ENCODE measurements at regions of chr3 and their contacts with region 1.

Region 1: DNA sequence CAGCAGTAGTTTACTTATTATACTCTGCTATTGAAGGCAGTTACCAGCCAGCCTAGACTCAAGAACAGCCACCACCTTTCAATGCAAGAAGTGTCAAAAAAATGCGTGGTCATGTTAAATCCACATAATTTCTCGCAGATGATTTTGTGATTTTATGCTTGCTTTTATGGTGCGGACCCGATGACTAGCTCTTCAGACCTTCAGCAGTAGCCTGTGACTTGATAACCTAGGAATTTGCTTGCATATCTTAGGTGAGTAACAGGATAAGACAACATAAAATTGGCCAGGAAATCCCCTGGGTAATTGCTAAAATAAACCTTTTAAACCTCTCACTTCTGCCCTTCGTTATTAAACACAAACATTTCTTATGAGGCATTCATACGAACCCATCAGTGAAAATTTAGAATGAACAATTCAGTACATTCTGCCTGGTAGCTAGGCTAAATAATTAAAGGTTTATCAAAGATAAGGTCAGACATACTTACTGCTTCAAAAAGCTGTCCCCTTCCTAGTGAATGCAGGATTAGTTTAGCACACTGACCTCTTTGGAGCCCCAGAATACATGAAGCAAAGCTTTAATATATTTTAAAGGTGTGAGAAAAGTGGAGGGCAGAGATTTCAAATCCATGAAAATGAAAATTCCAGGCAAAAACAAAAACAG is 798.8 kb downstream of the OTOL1 start:
- DNase-seq: no peak
- H3K4me3 ChIP-seq: no peak overlapping the region
- H3K4me3 Mint-ChIP-seq: peak overlapping the region; percentile 15
- H3K27ac Mint-ChIP-seq: peak overlapping the region; percentile 28
- H3K4me1 ChIP-seq: peaks cover 16% of the 10 kb centered on the region
- H3K4me1 Mint-ChIP-seq: peaks cover 8% of the 10 kb centered on the region
- H3K27me3 ChIP-seq: no peaks in the 10 kb centered on the region
- H3K27me3 Mint-ChIP-seq: no peaks in the 10 kb centered on the region
- CTCF ChIP-seq: no peak

Region 2: DNA sequence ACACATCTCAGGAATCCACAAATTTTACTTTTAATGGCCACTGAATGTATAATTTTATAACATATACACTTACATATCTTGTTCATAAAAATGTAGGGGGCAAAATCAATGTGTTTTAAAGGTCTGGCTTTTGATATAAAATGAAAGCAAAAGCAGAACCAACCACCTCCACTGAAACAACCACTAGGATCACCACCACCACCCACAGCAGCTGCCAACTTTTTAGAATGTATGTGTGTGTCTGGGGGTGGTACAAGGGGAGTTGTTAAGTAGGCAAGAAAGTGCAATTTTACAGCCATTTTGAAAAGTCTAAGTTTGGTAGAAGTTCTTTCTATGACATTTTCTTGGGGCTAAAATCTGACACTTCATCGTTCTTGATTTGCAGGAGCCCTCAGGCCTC is 754.9 kb before region 1 on chr3:
- CTCF ChIA-PET with region 1: no interaction called
- POLR2A ChIA-PET with region 1: no interaction called
- intact Hi-C with region 1: loop called (anchors 10 kb)
- DNase-seq: no peak
- H3K4me3 ChIP-seq: no peak overlapping the region
- H3K4me3 Mint-ChIP-seq: no peak overlapping the region
- H3K27ac Mint-ChIP-seq: no peak overlapping the region
- H3K4me1 ChIP-seq: no peaks in the 10 kb centered on the region
- H3K4me1 Mint-ChIP-seq: no peaks in the 10 kb centered on the region
- H3K27me3 ChIP-seq: no peaks in the 10 kb centered on the region
- H3K27me3 Mint-ChIP-seq: no peaks in the 10 kb centered on the region
- CTCF ChIP-seq: no peak

Region 3: DNA sequence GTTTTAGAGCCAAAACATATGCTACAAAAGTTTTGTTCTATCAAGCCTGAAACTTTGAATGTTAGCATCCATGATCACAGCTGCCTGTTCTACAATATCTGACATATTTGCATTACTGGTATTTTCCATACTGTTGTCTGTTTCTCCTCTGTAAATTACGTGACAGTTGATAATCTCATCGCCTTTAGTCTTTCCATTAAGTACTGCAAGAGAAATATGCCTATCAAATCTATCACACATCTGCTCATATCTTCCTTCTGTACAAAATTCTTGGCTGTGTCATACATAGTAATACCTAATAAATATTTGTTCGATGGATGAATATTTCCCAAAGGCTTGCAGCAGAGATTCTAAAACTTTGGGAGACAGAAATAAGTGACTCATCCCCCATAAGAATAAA is 81.5 kb before region 1 on chr3:
- CTCF ChIA-PET with region 1: no interaction called
- POLR2A ChIA-PET with region 1: no interaction called
- intact Hi-C with region 1: no loop called
- DNase-seq: no peak
- H3K4me3 ChIP-seq: no peak overlapping the region
- H3K4me3 Mint-ChIP-seq: no peak overlapping the region
- H3K27ac Mint-ChIP-seq: no peak overlapping the region
- H3K4me1 ChIP-seq: no peaks in the 10 kb centered on the region
- H3K4me1 Mint-ChIP-seq: no peaks in the 10 kb centered on the region
- H3K27me3 ChIP-seq: no peaks in the 10 kb centered on the region
- H3K27me3 Mint-ChIP-seq: no peaks in the 10 kb centered on the region
- CTCF ChIP-seq: no peak

Measured in Caco-2 (cell line).